Activated CD4-positive, alpha-beta memory T cell treated with anti-CD3 and anti-CD28 coated beads for 36 hours (primary cell): ENCODE measurements at regions of chr9 and their contacts with region 1.

Region 1: GRCh38 chr9:109903515-109904138 is 123.6 kb downstream of the PALM2AKAP2 start:
- DNase-seq: peak; percentile 74
- H3K4me3 Mint-ChIP-seq: no peak overlapping the region
- H3K27ac Mint-ChIP-seq: no peak overlapping the region
- H3K4me1 Mint-ChIP-seq: peaks cover 10% of the 10 kb centered on the region
- H3K27me3 Mint-ChIP-seq: peaks cover 6% of the 10 kb centered on the region

Region 2: DNA sequence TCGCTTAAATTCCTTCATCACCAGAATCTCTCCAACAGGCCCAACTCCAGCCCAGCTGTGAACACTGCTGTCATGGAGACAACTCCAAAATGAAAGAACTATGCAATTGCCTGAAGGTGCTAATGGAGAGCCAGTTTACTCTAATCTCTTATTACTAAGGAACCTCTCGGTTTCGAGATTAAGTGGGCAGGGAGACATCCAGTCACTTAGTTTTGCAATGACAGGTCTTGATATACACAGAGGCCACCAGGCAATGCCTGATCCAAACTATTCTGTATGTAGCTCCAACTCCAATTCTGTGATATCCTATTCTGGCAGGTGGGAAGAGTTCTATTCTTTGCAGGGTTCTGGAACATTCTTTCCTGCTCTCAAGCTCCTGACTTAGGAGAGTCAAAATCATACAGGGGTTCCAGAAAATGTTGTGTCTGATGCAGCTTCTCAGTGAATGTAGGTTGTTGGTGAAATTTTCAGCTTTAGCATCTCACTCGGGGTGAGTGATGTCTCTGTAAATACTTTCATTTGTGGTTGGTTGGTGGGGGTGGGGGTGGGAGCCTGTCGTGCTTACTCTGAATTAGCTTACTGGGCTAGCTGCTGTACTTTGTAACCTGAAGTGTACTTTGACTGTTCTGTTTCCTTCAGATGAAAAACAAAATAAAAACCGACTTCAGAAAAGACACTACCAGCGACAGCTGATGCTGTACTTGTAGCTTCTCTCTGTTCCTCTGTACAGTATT is 47.2 kb after region 1 on chr9:
- CTCF ChIA-PET with region 1: interaction called, 11 read pairs
- POLR2A ChIA-PET with region 1: no interaction called
- intact Hi-C with region 1: loop called (anchors 2 kb)
- DNase-seq: peak; percentile 64
- H3K4me3 Mint-ChIP-seq: peak overlapping the region; percentile 23
- H3K27ac Mint-ChIP-seq: peak overlapping the region; percentile 82
- H3K4me1 Mint-ChIP-seq: peaks cover 30% of the 10 kb centered on the region
- H3K27me3 Mint-ChIP-seq: no peaks in the 10 kb centered on the region

Region 3: GRCh38 chr9:110048403-110048975 is 144.9 kb after region 1 on chr9:
- CTCF ChIA-PET with region 1: interaction called, 19 read pairs
- POLR2A ChIA-PET with region 1: no interaction called
- intact Hi-C with region 1: loop called (anchors 2 kb)
- DNase-seq: peak; percentile 89
- H3K4me3 Mint-ChIP-seq: peak overlapping the region; percentile 90
- H3K27ac Mint-ChIP-seq: peak overlapping the region; percentile 72
- H3K4me1 Mint-ChIP-seq: peaks cover 39% of the 10 kb centered on the region
- H3K27me3 Mint-ChIP-seq: peaks cover 13% of the 10 kb centered on the region

Region 4: DNA sequence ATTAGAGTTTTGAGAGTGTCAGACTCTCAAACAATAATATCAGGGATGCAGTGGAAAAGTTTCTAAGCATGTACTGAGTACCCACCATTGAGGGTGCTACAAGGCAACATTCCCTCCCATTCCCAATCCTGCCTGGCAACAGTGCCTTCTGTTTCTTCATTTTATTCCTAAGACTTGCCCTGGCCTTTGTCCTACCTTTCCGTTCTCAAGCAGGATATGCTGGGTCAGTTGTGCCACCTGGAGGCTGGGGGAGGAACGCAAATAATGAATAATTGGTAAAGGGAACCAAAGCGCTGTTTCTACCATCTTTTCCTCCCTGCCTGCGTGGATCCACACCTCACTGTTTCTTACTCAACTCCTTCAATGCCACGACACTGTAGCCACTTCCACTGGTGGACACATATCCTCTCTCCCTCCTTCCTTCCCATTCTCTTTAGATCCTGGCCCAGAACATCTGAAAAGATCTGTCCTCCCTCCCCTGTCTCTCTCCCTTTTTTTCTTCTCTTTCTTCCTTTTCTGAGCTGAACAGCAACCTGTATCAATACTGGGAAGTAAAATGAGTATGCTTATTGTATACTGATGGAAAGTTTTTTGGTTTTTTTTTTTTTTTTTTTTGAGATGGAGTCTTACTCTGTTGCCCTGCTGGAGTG is 154.8 kb after region 1 on chr9:
- CTCF ChIA-PET with region 1: interaction called, 119 read pairs
- POLR2A ChIA-PET with region 1: no interaction called
- intact Hi-C with region 1: loop called (anchors 1 kb)
- DNase-seq: peak; percentile 67
- H3K4me3 Mint-ChIP-seq: no peak overlapping the region
- H3K27ac Mint-ChIP-seq: no peak overlapping the region
- H3K4me1 Mint-ChIP-seq: peaks cover 13% of the 10 kb centered on the region
- H3K27me3 Mint-ChIP-seq: no peaks in the 10 kb centered on the region

Region 5: DNA sequence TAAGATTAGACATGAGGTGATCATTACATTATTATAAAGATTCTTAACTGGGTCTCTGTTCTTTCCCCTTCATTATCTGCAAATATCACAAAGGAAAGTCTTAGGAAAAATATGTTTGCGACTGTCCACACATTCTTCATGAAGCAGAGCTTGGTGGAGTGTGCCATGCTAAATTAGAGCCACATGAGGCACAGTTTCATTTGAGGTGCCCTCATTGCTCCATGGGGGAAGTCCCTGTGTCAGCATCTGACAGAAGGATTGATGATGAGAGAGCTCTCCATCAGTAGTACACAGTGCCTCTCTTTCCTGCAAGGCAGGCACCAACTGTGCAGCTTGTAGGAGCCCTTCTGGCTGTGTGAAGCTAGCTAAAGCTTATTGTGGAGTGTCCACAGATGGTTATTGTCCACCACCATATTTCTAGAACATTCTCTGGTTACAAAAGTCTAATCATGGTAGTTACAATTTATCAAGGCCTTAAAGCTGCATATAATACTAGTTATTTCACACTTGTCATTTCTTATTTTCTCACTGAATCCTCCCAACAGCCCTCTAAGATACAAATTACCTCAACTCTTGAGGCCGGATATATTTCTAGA is 240.4 kb after region 1 on chr9:
- CTCF ChIA-PET with region 1: interaction called, 95 read pairs
- POLR2A ChIA-PET with region 1: interaction called, 3 read pairs
- intact Hi-C with region 1: loop called (anchors 1 kb)
- DNase-seq: peak; percentile 58
- H3K4me3 Mint-ChIP-seq: no peak overlapping the region
- H3K27ac Mint-ChIP-seq: peak overlapping the region; percentile 73
- H3K4me1 Mint-ChIP-seq: peaks cover 48% of the 10 kb centered on the region
- H3K27me3 Mint-ChIP-seq: no peaks in the 10 kb centered on the region

Region 6: DNA sequence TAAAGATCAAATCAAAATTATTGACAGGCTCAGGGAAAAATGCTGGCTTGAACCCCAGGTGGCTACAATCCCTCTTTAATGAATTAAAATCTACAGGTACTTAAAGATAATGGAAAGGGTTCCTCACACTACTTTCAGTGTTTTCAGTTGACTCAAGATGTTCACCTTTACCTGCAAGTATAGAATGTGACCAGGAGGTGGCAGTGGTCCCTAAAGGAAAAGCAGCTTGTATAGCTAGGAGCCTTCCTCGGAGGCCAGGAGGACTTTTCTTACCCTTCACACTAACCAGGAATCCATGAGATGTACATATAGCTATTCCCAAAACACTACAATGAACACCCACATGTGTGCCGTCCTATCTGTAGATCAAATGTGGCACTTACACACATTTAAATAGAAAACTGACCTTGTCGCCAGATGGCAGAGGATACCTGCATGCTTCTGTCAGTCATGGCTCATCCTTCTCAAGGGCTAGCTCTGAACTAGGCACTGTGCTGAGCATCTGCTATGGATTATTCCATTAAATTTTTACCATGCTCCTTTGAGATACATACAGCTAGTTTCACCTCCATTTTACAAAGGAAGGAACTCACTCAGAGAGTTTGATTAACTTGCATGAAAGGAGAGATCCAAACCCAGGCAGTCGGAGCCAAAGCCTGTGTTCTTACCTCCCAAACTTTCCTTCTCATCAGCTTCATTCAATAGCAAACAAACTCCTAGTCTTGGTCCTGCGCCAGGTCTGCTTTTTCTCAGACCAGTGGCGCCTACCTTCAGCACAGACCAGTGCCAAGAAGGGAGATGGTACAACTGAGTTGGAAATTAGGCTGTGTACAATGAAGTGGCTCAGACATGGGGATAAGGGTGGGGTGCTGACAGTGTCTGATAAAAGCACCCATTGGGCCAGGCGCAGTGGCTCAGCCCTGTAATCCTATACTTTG is 279.9 kb after region 1 on chr9:
- CTCF ChIA-PET with region 1: interaction called, 13 read pairs
- POLR2A ChIA-PET with region 1: no interaction called
- intact Hi-C with region 1: no loop called
- DNase-seq: peak; percentile 67
- H3K4me3 Mint-ChIP-seq: no peak overlapping the region
- H3K27ac Mint-ChIP-seq: no peak overlapping the region
- H3K4me1 Mint-ChIP-seq: no peaks in the 10 kb centered on the region
- H3K27me3 Mint-ChIP-seq: no peaks in the 10 kb centered on the region

Region 7: GRCh38 chr9:110217656-110218099 is 314.1 kb after region 1 on chr9:
- CTCF ChIA-PET with region 1: interaction called, 8 read pairs
- POLR2A ChIA-PET with region 1: no interaction called
- intact Hi-C with region 1: loop called (anchors 1 kb)
- DNase-seq: no peak
- H3K4me3 Mint-ChIP-seq: no peak overlapping the region
- H3K27ac Mint-ChIP-seq: no peak overlapping the region
- H3K4me1 Mint-ChIP-seq: no peaks in the 10 kb centered on the region
- H3K27me3 Mint-ChIP-seq: peaks cover 2% of the 10 kb centered on the region